Posterior vena cava (tissue), 2 donors: ENCODE measurements at regions of chr17 and their contacts with region 1.

Region 1: DNA sequence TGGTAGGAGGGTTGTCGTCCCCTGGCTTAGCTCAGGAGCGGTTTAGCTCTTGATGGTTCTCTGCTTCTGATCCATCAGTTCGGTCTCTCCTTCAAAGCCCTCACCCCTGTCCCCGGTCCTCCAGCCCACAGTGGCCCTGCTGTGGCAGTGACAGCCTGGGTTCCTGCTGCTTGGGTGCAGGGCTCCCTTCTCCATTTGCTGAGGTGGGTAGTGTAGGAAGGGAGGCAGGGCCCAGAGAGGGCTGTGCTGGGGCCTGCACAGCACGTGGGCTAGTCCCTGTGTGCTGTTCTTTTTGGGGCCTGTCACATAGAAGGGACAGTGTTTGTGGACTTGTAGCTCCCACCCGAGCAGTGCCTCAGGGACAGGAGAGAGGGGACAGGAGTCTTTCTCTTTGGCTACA is 18.3 kb downstream of the TMEM94 start:
- DNase-seq: no peak

Region 2: GRCh38 chr17:75507698-75508097 is 33.0 kb after region 1 on chr17:
- intact Hi-C with region 1: loop called in 1 of 2 experiments (anchors 1 kb)
- DNase-seq: no peak